ENCODE measurements at regions of chr11 and their contacts with region 1.

Region 1: DNA sequence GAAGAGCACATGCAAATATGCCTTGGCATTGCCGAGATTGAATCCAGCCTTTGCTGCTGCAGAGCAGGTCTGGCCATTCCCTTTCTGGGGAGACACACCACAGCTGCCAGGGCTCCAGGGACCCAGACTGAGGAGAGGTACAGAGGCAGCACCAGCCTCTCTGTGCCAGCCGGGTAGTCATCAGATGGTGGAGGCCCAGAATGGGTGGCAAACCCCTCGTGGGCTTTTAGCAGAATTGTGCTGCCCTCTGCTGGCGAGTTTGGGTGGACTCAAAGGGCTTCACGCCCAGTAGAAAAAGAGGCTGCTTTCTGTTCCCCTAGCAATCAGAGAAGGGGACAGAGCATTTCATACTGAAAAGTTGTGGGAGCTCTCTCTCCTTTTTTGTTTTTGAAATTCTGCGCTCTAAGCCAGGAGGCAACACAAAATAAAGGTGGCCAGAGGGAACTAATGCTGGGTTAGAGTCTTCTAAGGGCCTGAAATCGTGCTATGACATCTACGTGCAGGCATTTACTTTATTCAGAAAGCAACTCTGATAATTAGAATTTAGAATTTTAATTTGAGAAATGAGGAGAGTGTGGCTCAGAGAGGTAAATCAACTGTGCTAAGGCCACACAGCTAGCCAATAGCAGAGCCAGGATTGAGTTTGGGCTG is 158.8 kb upstream of the NAV2 start:
- DNase-seq: peak; percentile 89 to 91
- H3K4me3 ChIP-seq: no peak overlapping the region
- H3K27ac ChIP-seq: no peak overlapping the region
- H3K4me1 ChIP-seq: peaks cover 0 to 10% (median 3%) of the 10 kb centered on the region in 4 donors
- H3K27me3 ChIP-seq: no peaks in the 10 kb centered on the region
- CTCF ChIP-seq: peak in 6 of 7 experiments; percentile 30 to 89 (median 84)
- EP300 ChIP-seq: no peak
- POLR2A ChIP-seq: no peak

Region 2: GRCh38 chr11:19071255-19071654 is 482.6 kb before region 1 on chr11:
- intact Hi-C with region 1: loop called (anchors 5 kb)
- DNase-seq: peak; percentile 72 to 92
- H3K4me3 ChIP-seq: peak overlapping the region in 1 of 4 donors; percentile 16
- H3K27ac ChIP-seq: peak overlapping the region in 3 of 5 donors; percentile 74 to 76 (median 76)
- H3K4me1 ChIP-seq: peaks cover 18 to 36% (median 29%) of the 10 kb centered on the region in 4 donors
- H3K27me3 ChIP-seq: no peaks in the 10 kb centered on the region
- CTCF ChIP-seq: peak in 5 of 7 experiments; percentile 75 to 99 (median 86)
- EP300 ChIP-seq: no peak
- POLR2A ChIP-seq: no peak

Region 3: DNA sequence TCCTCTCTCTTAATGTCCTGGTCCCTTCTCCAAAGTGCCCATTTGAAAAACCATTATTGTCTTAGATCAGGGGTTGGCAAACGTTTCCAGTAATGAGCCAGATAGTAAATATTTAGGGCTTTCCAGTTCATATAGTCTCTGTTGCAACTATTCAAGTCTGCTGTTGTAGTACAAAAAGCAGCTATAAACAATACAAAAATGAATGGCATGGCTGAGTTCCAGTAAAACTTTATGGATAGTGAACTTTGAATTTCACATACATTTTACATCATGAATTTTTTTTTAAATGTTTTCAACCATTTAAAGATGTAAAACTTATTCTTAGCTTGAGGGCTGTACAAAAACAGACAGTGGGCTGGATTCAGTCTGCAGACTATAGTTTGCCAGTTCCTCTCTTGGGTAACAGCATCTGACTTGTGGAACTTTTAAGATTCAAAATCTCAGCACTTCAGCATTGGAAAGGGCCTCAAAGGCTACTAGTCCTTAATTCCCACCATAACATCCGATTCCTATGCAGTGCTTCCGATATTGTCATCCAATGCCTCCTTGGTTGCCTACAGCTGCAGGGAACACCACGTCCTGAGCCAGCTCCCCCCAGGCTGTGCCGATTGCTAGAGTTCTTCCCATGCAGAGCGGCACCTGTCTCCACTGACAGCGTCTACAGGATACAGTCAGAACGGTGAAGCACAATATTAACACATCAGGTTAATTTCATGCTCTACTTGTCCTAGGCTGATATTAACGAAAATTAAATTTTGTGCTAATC is 247.4 kb before region 1 on chr11:
- intact Hi-C with region 1: loop called (anchors 5 kb)
- DNase-seq: no peak
- H3K4me3 ChIP-seq: no peak overlapping the region
- H3K27ac ChIP-seq: no peak overlapping the region
- H3K4me1 ChIP-seq: no peaks in the 10 kb centered on the region
- H3K27me3 ChIP-seq: no peaks in the 10 kb centered on the region
- CTCF ChIP-seq: no peak
- EP300 ChIP-seq: no peak
- POLR2A ChIP-seq: no peak

Measured in stomach (tissue), 19 donors.